Common myeloid progenitor, CD34-positive (primary cell): ENCODE measurements at regions of chr12 and their contacts with region 1.

Region 1: GRCh38 chr12:54749191-54749818 is 101.1 kb upstream of the DCD start:
- DNase-seq: peak; percentile 72 to 86 (median 80)
- H3K4me3 ChIP-seq: peak overlapping the region in 1 of 7 experiments; percentile 1
- H3K27ac ChIP-seq: no peak overlapping the region
- H3K4me1 ChIP-seq: peaks cover 6 to 12% (median 11%) of the 10 kb centered on the region in 4 experiments
- H3K27me3 ChIP-seq: no peaks in the 10 kb centered on the region

Region 2: DNA sequence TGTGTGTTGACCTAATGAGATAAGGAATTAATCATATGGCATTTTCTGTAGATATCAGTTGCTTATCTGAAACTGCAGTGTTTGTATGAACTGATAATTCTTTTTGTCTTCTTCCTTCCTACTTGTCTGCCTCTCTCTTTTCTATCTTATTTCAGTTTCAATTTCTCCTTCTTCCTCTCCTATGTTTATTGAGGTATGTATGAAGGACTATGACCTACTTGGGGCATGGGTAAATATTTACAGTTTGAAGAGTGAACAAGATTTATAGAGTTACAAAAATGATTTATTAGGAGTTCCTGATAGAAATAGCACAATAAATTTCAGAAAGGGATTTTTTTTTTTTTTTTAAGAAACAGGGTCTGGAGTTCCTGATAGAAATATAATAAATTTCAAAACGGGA is 16.3 kb after region 1 on chr12:
- CTCF ChIA-PET with region 1: interaction called, 12 read pairs
- POLR2A ChIA-PET with region 1: no interaction called
- DNase-seq: peak in 1 of 3 donors; percentile 16
- H3K4me3 ChIP-seq: no peak overlapping the region
- H3K27ac ChIP-seq: no peak overlapping the region
- H3K4me1 ChIP-seq: peaks cover 0 to 3% (median 0%) of the 10 kb centered on the region in 4 experiments
- H3K27me3 ChIP-seq: no peaks in the 10 kb centered on the region